ENCODE measurements at regions of chr12 and their contacts with region 1.

Region 1: GRCh38 chr12:15522565-15523187 is 200.4 kb downstream of the PTPRO start:
- DNase-seq: peak in 1 of 2 experiments; percentile 65
- H3K4me3 ChIP-seq: no peak overlapping the region
- H3K4me1 ChIP-seq: no peaks in the 10 kb centered on the region
- H3K27me3 ChIP-seq: peaks cover 34% of the 10 kb centered on the region

Region 2: GRCh38 chr12:15276088-15276698 is 246.5 kb before region 1 on chr12:
- in situ Hi-C with region 1: loop called (anchors 10 kb)
- DNase-seq: peak; percentile 39 to 58
- H3K4me3 ChIP-seq: no peak overlapping the region
- H3K4me1 ChIP-seq: no peaks in the 10 kb centered on the region
- H3K27me3 ChIP-seq: no peaks in the 10 kb centered on the region